MCF 10A (cell line): ENCODE measurements at regions of chr14 and their contacts with region 1.

Region 1: DNA sequence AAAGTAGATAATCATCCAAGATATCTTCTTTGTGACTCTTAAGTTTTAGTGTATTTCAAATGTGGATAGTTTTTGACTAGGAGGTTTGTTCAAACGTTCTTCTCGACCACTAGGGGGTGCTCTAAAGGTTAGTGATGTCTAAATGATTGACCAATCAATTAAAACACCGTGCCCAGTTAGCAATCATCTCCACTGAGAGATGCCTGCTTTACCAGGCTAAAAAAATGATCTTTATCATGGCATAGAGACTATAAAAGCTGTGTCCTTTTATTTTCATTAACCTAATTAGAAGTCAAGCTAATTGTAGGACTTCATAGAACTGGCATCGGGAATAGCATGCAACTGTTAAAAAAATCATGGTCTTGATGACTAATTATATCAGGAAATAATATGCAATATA is 153.9 kb downstream of the PRKCH start:
- DNase-seq: peak; percentile 84
- H3K4me3 Mint-ChIP-seq: no peak overlapping the region
- H3K27ac Mint-ChIP-seq: no peak overlapping the region
- H3K4me1 Mint-ChIP-seq: peaks cover 58% of the 10 kb centered on the region
- H3K27me3 Mint-ChIP-seq: no peaks in the 10 kb centered on the region
- CTCF ChIP-seq: peak; percentile 46

Region 2: GRCh38 chr14:61321385-61322010 is 153.8 kb before region 1 on chr14 and contains the start of gene PRKCH:
- CTCF ChIA-PET with region 1: interaction called, 11 read pairs
- POLR2A ChIA-PET with region 1: interaction called, 3 read pairs
- intact Hi-C with region 1: no loop called
- DNase-seq: peak; percentile 78
- H3K4me3 Mint-ChIP-seq: peak within 1 kb of the TSS; percentile 94
- H3K27ac Mint-ChIP-seq: peak within 1 kb of the TSS; percentile 98
- H3K4me1 Mint-ChIP-seq: peaks cover 15% of the 10 kb centered on the region
- H3K27me3 Mint-ChIP-seq: no peaks in the 10 kb centered on the region
- CTCF ChIP-seq: no peak
- total RNA-seq, gene PRKCH: 10.4 and 12.4 TPM in 2 replicates

Region 3: DNA sequence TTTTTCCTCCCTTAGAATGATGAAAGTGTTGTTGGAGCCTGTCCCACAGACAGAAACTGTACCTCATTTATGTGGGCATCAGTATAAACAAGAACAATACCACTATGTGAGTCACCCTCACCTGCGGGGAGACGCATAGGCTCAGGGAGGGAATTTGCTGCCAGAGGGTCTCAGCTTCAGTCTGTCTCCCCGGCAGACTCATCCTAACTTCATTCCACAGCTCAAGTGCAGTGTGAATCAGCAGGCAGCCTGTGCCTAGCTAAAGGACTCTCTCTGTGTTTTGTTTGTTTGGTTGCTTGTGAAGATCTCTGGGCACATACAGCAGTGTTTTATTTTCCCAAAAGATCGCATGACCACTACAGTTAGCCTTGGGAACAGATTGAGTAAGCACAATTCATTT is 55.0 kb before region 1 on chr14:
- CTCF ChIA-PET with region 1: no interaction called
- POLR2A ChIA-PET with region 1: no interaction called
- intact Hi-C with region 1: no loop called
- DNase-seq: peak; percentile 88
- H3K4me3 Mint-ChIP-seq: peak overlapping the region; percentile 45
- H3K27ac Mint-ChIP-seq: peak overlapping the region; percentile 71
- H3K4me1 Mint-ChIP-seq: peaks cover 32% of the 10 kb centered on the region
- H3K27me3 Mint-ChIP-seq: no peaks in the 10 kb centered on the region
- CTCF ChIP-seq: no peak

Region 4: DNA sequence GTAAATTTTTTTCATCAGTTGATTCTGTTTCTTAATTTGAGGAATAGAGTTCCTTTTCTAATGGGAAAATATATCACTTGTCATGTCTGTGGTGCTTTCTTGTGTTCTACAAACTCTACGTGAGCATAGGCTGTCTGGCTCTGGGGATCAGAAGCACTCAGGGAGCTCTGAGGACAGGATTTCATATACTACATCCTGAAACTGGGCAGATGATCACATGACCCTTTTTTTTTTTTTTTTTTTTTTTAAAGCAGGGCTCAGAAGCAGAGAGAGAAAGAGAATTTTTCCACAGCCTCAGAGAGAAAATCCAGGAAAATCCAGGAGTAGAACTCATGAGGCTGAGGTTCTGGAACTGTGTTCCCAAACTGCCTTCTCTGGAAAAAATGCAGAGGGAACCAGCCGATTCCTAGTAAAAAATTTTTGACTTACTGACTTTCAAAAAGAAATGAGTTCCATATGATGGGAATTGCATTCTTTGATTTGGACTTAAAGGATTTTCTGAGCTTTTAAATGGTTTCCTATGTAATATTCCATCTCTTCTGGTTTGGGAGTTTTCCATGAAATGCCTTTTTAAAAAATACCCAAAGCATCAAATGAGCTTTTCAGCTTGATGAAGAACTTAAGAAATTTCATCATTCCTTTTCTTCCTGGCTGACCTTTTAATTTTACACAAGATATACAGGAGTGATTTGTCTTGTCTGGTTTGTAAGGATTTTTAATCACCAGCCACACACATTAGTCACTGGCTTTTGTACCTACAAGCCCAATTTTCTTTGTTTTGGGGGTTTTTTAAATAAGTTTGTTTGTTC is 36.9 kb after region 1 on chr14:
- CTCF ChIA-PET with region 1: interaction called, 8 read pairs
- POLR2A ChIA-PET with region 1: interaction called, 32 read pairs
- intact Hi-C with region 1: no loop called
- DNase-seq: peak; percentile 83
- H3K4me3 Mint-ChIP-seq: peak overlapping the region; percentile 38
- H3K27ac Mint-ChIP-seq: peak overlapping the region; percentile 61
- H3K4me1 Mint-ChIP-seq: peaks cover 19% of the 10 kb centered on the region
- H3K27me3 Mint-ChIP-seq: no peaks in the 10 kb centered on the region
- CTCF ChIP-seq: no peak

Region 5: DNA sequence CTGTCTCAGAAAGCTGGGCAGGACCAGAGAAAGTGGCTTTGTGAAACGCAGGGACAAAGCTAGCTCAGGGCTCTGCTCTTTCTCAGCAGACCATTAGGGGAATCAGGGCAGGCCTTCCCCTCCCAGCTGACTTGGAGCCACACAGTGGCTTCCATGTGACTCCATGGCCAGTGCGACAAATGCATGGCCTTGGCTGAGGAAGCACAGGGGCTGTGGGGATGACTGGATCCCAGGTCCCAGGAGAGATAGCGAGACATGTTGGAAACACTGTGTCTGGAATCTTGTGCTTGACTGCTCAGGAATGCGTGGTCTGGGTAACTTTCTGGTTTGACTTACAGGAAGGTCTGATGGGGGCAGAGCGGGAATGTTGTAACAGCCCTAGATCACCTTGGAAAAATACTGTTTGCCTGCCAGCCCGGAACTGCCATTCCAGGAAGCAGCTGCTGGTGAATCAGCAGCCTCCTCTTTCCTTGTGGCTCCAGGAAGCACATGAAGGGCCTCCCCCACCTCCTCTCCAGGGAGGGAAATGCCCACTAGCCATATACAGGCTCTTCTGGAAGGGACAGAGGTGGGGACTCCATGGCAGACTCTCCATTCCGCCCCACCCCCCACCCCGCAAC is 86.5 kb after region 1 on chr14:
- CTCF ChIA-PET with region 1: interaction called, 14 read pairs
- POLR2A ChIA-PET with region 1: interaction called, 33 read pairs
- intact Hi-C with region 1: loop called (anchors 2 kb)
- DNase-seq: peak; percentile 97
- H3K4me3 Mint-ChIP-seq: peak overlapping the region; percentile 3
- H3K27ac Mint-ChIP-seq: peak overlapping the region; percentile 86
- H3K4me1 Mint-ChIP-seq: peaks cover 56% of the 10 kb centered on the region
- H3K27me3 Mint-ChIP-seq: no peaks in the 10 kb centered on the region
- CTCF ChIP-seq: no peak

Region 6: DNA sequence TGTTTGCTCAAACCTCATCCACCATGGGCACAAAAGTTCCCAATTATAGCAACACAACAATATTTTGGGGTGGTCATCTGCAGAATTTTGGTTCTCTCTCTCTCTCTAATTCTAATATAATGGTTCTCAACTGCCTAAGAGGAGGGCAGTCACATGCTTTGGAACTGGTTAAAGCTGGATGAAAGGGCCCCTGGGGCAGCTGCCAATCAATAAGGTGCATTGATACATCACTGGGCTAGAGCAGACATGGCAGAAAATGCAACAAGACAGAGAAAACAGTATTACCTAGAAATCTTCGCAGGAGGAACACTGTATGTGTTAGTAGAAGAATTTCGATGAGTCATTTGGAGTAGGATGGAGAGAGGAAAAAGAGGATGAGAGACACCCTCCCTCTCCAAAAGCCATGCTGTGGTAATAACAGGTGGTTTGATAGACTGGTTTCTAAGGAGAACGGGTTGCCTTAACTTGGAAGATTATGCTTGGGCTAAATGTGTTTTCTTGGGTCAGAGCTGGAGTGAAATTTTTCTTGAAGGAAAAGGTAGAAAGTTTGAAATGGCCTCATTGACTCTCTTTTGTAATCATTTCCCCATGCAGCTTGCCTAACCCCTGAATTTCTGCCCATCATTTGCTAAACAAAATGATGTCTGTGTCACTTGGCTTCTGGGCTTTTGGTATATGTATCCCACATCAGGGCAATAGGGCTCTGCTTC is 152.9 kb after region 1 on chr14:
- CTCF ChIA-PET with region 1: no interaction called
- POLR2A ChIA-PET with region 1: no interaction called
- intact Hi-C with region 1: no loop called
- DNase-seq: no peak
- H3K4me3 Mint-ChIP-seq: no peak overlapping the region
- H3K27ac Mint-ChIP-seq: no peak overlapping the region
- H3K4me1 Mint-ChIP-seq: peaks cover 13% of the 10 kb centered on the region
- H3K27me3 Mint-ChIP-seq: no peaks in the 10 kb centered on the region
- CTCF ChIP-seq: no peak

Region 7: DNA sequence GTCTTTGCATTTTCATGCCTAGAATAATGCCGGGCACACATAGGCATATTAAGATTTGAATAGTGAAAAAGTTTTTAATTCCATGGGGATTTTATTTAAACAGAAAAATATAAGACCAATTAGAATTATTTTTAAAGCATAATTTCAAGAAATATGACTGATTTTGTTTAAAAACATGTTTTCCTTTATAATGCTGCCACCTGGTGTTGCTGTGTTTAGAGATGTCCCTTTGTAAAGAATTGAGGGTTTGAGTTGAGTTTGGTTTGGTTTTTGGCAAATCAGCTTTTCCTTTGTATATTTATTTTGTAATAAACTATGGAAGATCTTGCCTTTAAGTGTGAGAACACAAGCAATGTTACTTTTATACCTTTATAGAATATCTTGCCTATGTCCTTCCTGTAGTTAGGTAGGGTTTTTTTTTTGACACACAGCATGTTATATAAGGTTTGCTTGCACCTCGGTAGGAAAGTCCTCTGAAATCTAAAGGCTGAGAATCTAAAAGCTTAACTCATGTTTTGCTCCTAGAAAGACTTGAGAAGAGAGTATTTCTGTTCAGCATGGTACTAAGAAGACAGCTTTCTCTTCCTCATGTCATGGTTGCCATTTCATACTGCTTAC is 255.5 kb after region 1 on chr14:
- CTCF ChIA-PET with region 1: interaction called, 10 read pairs
- POLR2A ChIA-PET with region 1: no interaction called
- intact Hi-C with region 1: loop called (anchors 1 kb)
- DNase-seq: no peak
- H3K4me3 Mint-ChIP-seq: no peak overlapping the region
- H3K27ac Mint-ChIP-seq: peak overlapping the region; percentile 28
- H3K4me1 Mint-ChIP-seq: peaks cover 5% of the 10 kb centered on the region
- H3K27me3 Mint-ChIP-seq: no peaks in the 10 kb centered on the region
- CTCF ChIP-seq: peak; percentile 52

Region 8: GRCh38 chr14:61837336-61838229 is 362.3 kb after region 1 on chr14:
- CTCF ChIA-PET with region 1: interaction called, 19 read pairs
- POLR2A ChIA-PET with region 1: no interaction called
- intact Hi-C with region 1: no loop called
- DNase-seq: peak; percentile 86
- H3K4me3 Mint-ChIP-seq: no peak overlapping the region
- H3K27ac Mint-ChIP-seq: no peak overlapping the region
- H3K4me1 Mint-ChIP-seq: no peaks in the 10 kb centered on the region
- H3K27me3 Mint-ChIP-seq: no peaks in the 10 kb centered on the region
- CTCF ChIP-seq: peak; percentile 93

Region 9: GRCh38 chr14:62914025-62914424 is 1438.7 kb after region 1 on chr14:
- CTCF ChIA-PET with region 1: no interaction called
- POLR2A ChIA-PET with region 1: no interaction called
- intact Hi-C with region 1: no loop called
- DNase-seq: peak; percentile 6
- H3K4me3 Mint-ChIP-seq: no peak overlapping the region
- H3K27ac Mint-ChIP-seq: no peak overlapping the region
- H3K4me1 Mint-ChIP-seq: no peaks in the 10 kb centered on the region
- H3K27me3 Mint-ChIP-seq: no peaks in the 10 kb centered on the region
- CTCF ChIP-seq: no peak